ENCODE measurements at regions of chr3 and their contacts with region 1.

Region 1: GRCh38 chr3:45906681-45907407 is 20.5 kb downstream of the CCR9 start:
- DNase-seq: no peak
- ATAC-seq: no peak
- H3K4me3 ChIP-seq: no peak overlapping the region
- H3K27ac ChIP-seq: no peak overlapping the region
- H3K4me1 ChIP-seq: peaks cover 17% of the 10 kb centered on the region
- H3K27me3 ChIP-seq: 0 out of 4 replicates have a peak, but pooled peaks cover 0 to 2% of the 10 kb centered on the region in 2 experiments
- CTCF ChIP-seq: peak; percentile 35 to 46 (median 39); a peak in 4 of 6 replicates
- EP300 ChIP-seq: no peak
- POLR2A ChIP-seq: no peak
- RAD21 ChIP-seq: peak; percentile 71

Region 2: DNA sequence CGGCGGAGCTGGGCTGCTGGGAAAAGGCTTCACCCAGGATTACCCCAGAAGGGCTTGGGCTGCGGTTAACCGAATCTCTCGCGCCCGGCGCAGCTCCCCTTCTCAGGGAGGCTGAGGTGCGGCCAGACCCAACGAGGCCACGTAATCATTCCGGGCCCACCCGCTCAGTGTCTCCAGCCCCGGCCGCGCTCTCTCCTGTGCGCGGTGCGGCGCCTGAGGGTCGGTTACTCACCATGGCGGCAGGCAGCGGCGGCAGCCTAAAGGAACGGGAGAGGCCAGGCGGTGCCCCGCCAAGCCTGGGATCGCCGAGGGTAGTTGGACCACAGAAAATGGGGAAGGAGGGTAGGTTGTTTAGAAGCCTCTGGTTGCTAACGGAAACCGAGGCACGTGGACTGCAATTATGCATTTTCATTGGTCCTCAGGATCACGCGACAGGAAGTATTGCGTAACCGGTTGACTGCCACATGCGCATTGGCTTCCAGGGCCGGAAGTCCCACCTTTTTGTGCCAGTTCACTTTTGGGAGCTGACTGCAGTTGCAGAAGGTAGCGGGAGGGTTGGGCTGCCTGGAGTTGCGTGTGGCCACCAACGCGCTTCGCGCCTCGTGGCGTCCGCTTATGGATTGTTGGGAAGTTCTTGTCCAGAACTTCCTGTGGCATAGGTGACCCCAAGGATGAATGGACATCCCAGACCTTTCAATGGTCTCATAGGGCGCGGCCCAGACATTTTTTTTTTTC is 64.9 kb before region 1 on chr3 and contains the start of gene LZTFL1:
- CTCF ChIA-PET with region 1: interaction called, 3 read pairs
- POLR2A ChIA-PET with region 1: interaction called, 3 read pairs
- RAD21 ChIA-PET with region 1: interaction called, 20 read pairs
- SMC1A ChIA-PET with region 1: interaction called, 68 read pairs
- in situ Hi-C with region 1: no loop called
- intact Hi-C with region 1: no loop called
- DNase-seq: peak; percentile 88
- ATAC-seq: peak; percentile 99
- H3K4me3 ChIP-seq: peak within 1 kb of the TSS; percentile 92
- H3K27ac ChIP-seq: no peak within 1 kb of the TSS; the same call in 1 of the 2 replicates
- H3K4me1 ChIP-seq: no peaks in the 10 kb centered on the region; the same call in 1 of the 2 replicates
- H3K27me3 ChIP-seq: no peaks in the 10 kb centered on the region; a peak in 1 of 4 replicates
- CTCF ChIP-seq: no peak
- EP300 ChIP-seq: no peak
- POLR2A ChIP-seq: peak; percentile 79
- RAD21 ChIP-seq: no peak
- polyA plus RNA-seq, gene LZTFL1: 10.0 to 10.8 TPM

Region 3: DNA sequence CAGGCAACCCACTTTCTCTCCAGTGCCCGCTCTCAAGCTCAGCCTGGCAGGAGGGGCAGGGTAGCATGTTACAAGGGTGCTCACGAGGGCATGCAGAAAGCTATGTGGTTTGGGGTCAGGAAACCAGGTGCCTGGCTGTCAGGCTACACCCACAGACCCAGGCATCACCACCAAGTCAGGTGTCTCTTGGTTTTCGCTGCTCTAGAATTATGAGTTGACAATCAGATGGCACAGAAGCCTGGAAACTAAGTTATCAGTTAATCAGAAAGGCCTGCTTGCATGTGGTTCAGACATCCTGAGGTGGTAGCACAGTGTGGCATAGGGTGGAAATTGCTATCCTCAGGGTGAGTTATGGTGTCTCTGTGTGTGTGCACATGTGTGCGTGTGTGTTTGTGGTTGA is 36.7 kb before region 1 on chr3:
- CTCF ChIA-PET with region 1: interaction called, 67 read pairs
- POLR2A ChIA-PET with region 1: interaction called, 24 read pairs
- RAD21 ChIA-PET with region 1: interaction called, 229 read pairs
- SMC1A ChIA-PET with region 1: interaction called, 199 read pairs
- in situ Hi-C with region 1: no loop called
- intact Hi-C with region 1: no loop called
- DNase-seq: no peak
- ATAC-seq: peak; percentile 64
- H3K4me3 ChIP-seq: no peak overlapping the region
- H3K27ac ChIP-seq: no peak overlapping the region
- H3K4me1 ChIP-seq: peaks cover 43% of the 10 kb centered on the region
- H3K27me3 ChIP-seq: no peaks in the 10 kb centered on the region; a peak in 1 of 4 replicates
- CTCF ChIP-seq: no peak
- EP300 ChIP-seq: peak in 1 of 2 experiments; percentile 62; a peak in 2 of 4 replicates
- POLR2A ChIP-seq: no peak
- RAD21 ChIP-seq: no peak

Region 4: GRCh38 chr3:45923755-45924154 is 16.9 kb after region 1 on chr3:
- CTCF ChIA-PET with region 1: interaction called, 50 read pairs
- POLR2A ChIA-PET with region 1: interaction called, 22 read pairs
- RAD21 ChIA-PET with region 1: interaction called, 36 read pairs
- SMC1A ChIA-PET with region 1: interaction called, 42 read pairs
- in situ Hi-C with region 1: no loop called
- intact Hi-C with region 1: no loop called
- DNase-seq: no peak
- ATAC-seq: no peak
- H3K4me3 ChIP-seq: no peak overlapping the region
- H3K27ac ChIP-seq: no peak overlapping the region
- H3K4me1 ChIP-seq: no peaks in the 10 kb centered on the region; the same call in 1 of the 2 replicates
- H3K27me3 ChIP-seq: no peaks in the 10 kb centered on the region
- CTCF ChIP-seq: no peak
- EP300 ChIP-seq: no peak
- POLR2A ChIP-seq: no peak
- RAD21 ChIP-seq: no peak